ENCODE measurements at regions of chr16 and their contacts with region 1.

Region 1: GRCh38 chr16:53346-54236 is at the starts of genes POLR3K and SNRNP25:
- DNase-seq: peak; percentile 98
- ATAC-seq: peak; percentile 98
- H3K4me3 Mint-ChIP-seq: peak within 1 kb of the TSS; percentile 99
- H3K27ac Mint-ChIP-seq: peak within 1 kb of the TSS; percentile 99
- H3K4me1 Mint-ChIP-seq: peaks cover 13% of the 10 kb centered on the region
- H3K27me3 Mint-ChIP-seq: no peaks in the 10 kb centered on the region; the same call in 1 of the 2 replicates
- CTCF ChIP-seq: no peak
- total RNA-seq, gene POLR3K: 37.9 to 40.1 TPM (median 38.6 TPM) in 3 replicates
- total RNA-seq, gene SNRNP25: 51.6 to 55.9 TPM (median 54.7 TPM) in 3 replicates

Region 2: DNA sequence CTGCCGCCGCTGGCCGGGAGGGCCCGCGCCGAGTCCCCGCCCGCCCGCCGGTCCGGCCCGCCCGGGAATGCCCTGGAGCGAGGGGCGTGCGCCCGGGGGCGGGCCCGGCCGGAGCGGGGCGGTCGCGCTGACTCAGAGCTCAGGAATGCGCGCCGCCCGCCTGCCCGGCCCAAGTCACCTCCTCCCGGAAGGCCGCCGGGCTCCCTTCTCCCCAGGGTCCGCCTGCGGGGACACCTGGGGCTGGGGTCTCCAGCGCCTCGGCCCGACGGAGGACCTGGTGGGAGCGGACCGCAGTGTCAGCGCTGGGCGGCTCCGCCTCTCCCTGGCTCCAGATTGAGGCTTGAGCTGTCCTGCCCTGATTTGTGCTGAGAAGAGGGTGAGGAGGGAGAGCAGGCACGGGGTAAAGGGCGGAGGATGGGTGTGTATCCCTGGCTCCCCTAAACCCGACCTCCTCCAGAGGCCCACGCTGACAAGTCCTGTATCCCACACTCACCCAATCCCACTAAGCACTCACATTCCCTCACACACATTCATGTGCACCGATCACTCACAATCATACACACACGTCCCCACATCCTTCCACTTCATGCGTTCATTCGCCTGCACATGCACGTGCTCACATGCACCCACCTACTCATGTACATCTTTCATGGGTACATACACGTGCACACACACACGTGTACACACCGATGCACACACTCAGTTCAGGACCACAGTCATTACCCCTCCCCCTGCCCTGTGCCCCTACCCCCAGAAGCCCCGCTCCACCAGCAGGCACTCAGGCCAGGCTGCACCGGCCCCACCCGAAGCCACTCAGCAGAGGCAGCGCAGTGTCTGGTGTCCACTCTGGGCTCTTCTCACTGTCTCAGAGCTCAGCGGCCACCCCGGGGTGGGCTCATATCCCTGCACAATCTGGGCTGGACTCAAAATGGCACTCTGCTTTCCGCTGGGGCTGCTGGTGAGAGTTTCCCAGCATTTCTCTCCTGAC is 19.3 kb after region 1 on chr16 and contains the start of gene RHBDF1:
- CTCF ChIA-PET with region 1: interaction called, 6 read pairs
- POLR2A ChIA-PET with region 1: interaction called, 16 read pairs
- DNase-seq: peak; percentile 74
- ATAC-seq: peak; percentile 43
- H3K4me3 Mint-ChIP-seq: peak within 1 kb of the TSS; percentile 81
- H3K27ac Mint-ChIP-seq: peak within 1 kb of the TSS; percentile 96
- H3K4me1 Mint-ChIP-seq: peaks cover 61% of the 10 kb centered on the region
- H3K27me3 Mint-ChIP-seq: no peaks in the 10 kb centered on the region; the same call in 1 of the 2 replicates
- CTCF ChIP-seq: no peak
- total RNA-seq, gene RHBDF1: 40.9 to 60.8 TPM (median 44.2 TPM) in 3 replicates

Region 3: DNA sequence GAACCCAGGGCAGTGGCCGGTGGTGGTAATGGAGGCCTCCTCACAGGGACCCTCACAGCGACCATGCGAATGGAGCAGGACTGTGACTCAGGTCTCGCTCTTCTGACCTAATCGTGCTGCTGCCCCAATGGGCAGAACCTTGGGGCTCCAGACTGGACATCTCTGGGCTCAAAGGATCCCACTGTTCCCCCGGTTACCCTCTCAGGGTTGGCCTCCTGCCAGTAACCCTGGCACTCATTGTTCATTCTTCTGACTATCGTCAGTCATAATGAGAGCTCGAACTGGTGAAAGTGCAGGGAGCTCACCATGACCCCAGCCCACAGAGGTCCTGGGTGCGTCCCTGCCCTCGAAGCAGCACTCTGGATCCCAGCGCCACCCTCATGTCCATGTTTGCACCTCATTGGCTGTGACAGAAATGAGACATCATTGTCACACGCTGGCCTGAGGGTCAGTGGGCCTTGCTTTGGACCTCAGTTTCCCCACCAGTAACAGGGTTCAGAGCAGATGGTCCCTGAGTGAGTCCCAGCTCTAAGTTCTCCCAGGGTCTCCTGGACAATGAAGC is 88.9 kb after region 1 on chr16:
- CTCF ChIA-PET with region 1: no interaction called
- POLR2A ChIA-PET with region 1: no interaction called
- DNase-seq: no peak
- ATAC-seq: no peak
- H3K4me3 Mint-ChIP-seq: no peak overlapping the region
- H3K27ac Mint-ChIP-seq: no peak overlapping the region
- H3K4me1 Mint-ChIP-seq: no peaks in the 10 kb centered on the region
- H3K27me3 Mint-ChIP-seq: peaks cover 31% of the 10 kb centered on the region
- CTCF ChIP-seq: no peak

Region 4: GRCh38 chr16:303760-304505 is 250.3 kb after region 1 on chr16:
- CTCF ChIA-PET with region 1: no interaction called
- POLR2A ChIA-PET with region 1: no interaction called
- DNase-seq: no peak
- ATAC-seq: 0 out of 2 replicates have a peak, but pooled peaks have one; percentile 20
- H3K4me3 Mint-ChIP-seq: no peak overlapping the region
- H3K27ac Mint-ChIP-seq: peak overlapping the region; percentile 78
- H3K4me1 Mint-ChIP-seq: no peaks in the 10 kb centered on the region
- H3K27me3 Mint-ChIP-seq: no peaks in the 10 kb centered on the region
- CTCF ChIP-seq: no peak

Measured in WTC11 (cell line).